Ovary (tissue), 10 donors: ENCODE measurements at regions of chr14 and their contacts with region 1.

Region 1: GRCh38 chr14:71753126-71753830 is 179.0 kb upstream of the RGS6 start:
- DNase-seq: peak; percentile 81 to 94 (median 92)
- H3K4me3 ChIP-seq: no peak overlapping the region
- H3K27ac ChIP-seq: no peak overlapping the region
- H3K4me1 ChIP-seq: peaks cover 4% of the 10 kb centered on the region
- H3K27me3 ChIP-seq: no peaks in the 10 kb centered on the region
- CTCF ChIP-seq: peak; percentile 76 to 82 (median 79)
- EP300 ChIP-seq: no peak
- POLR2A ChIP-seq: no peak

Region 2: GRCh38 chr14:71138448-71139293 is 614.6 kb before region 1 on chr14:
- intact Hi-C with region 1: loop called (anchors 2 to 5 kb)
- DNase-seq: peak; percentile 13 to 64 (median 50)
- H3K4me3 ChIP-seq: no peak overlapping the region
- H3K27ac ChIP-seq: no peak overlapping the region
- H3K4me1 ChIP-seq: peaks cover 2% of the 10 kb centered on the region
- H3K27me3 ChIP-seq: no peaks in the 10 kb centered on the region
- CTCF ChIP-seq: peak; percentile 51 to 79 (median 60)
- EP300 ChIP-seq: no peak
- POLR2A ChIP-seq: no peak

Region 3: DNA sequence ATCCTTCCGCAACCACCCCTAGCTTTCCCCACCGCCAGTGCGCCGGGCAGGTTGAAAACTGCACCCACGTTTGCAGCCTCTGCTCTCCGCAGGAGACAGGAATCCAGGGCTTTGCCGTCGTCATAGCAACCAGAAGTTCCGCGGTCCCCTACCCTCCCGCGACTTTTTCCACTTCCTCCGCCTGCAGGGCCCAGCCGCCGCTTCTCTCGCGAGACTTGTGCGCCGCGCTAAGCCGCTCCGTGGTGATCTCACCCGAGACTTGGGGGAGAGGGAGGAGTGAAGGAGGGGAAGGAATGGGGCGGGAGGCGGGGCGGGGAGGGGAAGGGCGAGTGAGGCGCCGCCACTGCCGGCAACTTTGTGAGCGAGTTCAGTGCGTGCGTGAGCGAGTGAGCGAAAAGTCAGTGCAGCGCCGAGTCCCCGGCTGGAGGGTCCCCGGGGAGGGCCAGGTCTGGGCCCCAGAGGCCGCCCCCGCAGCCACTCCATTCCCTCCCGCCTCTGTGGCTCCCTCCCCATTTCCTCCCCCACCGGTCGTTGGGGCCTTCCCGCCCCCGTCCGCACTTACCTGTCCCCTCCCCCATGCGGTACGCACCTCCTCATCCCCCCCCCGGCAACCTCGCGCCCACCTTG is 433.1 kb before region 1 on chr14:
- intact Hi-C with region 1: loop called in 3 of 4 experiments (anchors 5 to 10 kb)
- DNase-seq: peak; percentile 97 to 99 (median 98)
- H3K4me3 ChIP-seq: peak within 1 kb of the TSS; percentile 84
- H3K27ac ChIP-seq: peak within 1 kb of the TSS; percentile 93 to 98
- H3K4me1 ChIP-seq: no peaks in the 10 kb centered on the region
- H3K27me3 ChIP-seq: no peaks in the 10 kb centered on the region
- CTCF ChIP-seq: no peak
- EP300 ChIP-seq: no peak
- POLR2A ChIP-seq: peak; percentile 75